ENCODE measurements at regions of chr18 and their contacts with region 1.

Region 1: GRCh38 chr18:42351455-42351854 is 396.4 kb downstream of the PIK3C3 start:
- DNase-seq: no peak
- H3K4me3 ChIP-seq: no peak overlapping the region
- H3K27ac ChIP-seq: no peak overlapping the region
- H3K4me1 ChIP-seq: no peaks in the 10 kb centered on the region
- H3K27me3 ChIP-seq: no peaks in the 10 kb centered on the region
- CTCF ChIP-seq: no peak
- POLR2A ChIP-seq: no peak

Region 2: DNA sequence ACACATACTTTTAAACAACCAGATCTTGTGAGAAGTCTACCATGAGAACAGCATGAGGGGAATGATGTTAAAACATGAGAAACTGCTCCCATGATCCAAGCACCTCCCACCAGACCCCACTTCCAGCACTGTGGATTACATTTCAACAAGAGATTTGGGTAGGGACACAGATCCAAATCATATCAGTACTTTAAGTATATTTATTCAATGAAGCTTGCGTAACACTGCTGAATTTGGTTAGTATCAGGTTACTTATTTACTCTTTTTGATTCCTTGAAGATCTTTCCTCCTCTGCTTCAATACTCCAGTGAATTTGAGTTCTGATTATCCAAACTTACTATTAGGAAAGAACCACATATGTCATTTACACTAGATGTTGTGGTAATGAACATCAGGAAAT is 22.1 kb after region 1 on chr18:
- intact Hi-C with region 1: loop called (anchors 2 kb)
- DNase-seq: no peak
- H3K4me3 ChIP-seq: no peak overlapping the region
- H3K27ac ChIP-seq: peak overlapping the region in 1 of 2 donors; percentile 43
- H3K4me1 ChIP-seq: no peaks in the 10 kb centered on the region
- H3K27me3 ChIP-seq: no peaks in the 10 kb centered on the region
- CTCF ChIP-seq: no peak
- POLR2A ChIP-seq: no peak

Measured in prostate gland (tissue), 2 donors.